MCF 10A (cell line): ENCODE measurements at regions of chr17 and their contacts with region 1.

Region 1: GRCh38 chr17:49646391-49647255 is 31.3 kb downstream of the SPOP start:
- DNase-seq: peak; percentile 76
- H3K4me3 Mint-ChIP-seq: peak overlapping the region; percentile 79
- H3K27ac Mint-ChIP-seq: peak overlapping the region; percentile 84
- H3K4me1 Mint-ChIP-seq: peaks cover 23% of the 10 kb centered on the region
- H3K27me3 Mint-ChIP-seq: no peaks in the 10 kb centered on the region
- CTCF ChIP-seq: no peak

Region 2: GRCh38 chr17:48352630-48353029 is 1294.0 kb before region 1 on chr17:
- CTCF ChIA-PET with region 1: no interaction called
- POLR2A ChIA-PET with region 1: no interaction called
- intact Hi-C with region 1: no loop called
- DNase-seq: no peak
- H3K4me3 Mint-ChIP-seq: no peak overlapping the region
- H3K27ac Mint-ChIP-seq: no peak overlapping the region
- H3K4me1 Mint-ChIP-seq: no peaks in the 10 kb centered on the region
- H3K27me3 Mint-ChIP-seq: peaks cover 40% of the 10 kb centered on the region
- CTCF ChIP-seq: no peak

Region 3: GRCh38 chr17:49515196-49515770 is 131.3 kb before region 1 on chr17:
- CTCF ChIA-PET with region 1: no interaction called
- POLR2A ChIA-PET with region 1: no interaction called
- intact Hi-C with region 1: no loop called
- DNase-seq: peak; percentile 91
- H3K4me3 Mint-ChIP-seq: no peak overlapping the region
- H3K27ac Mint-ChIP-seq: peak overlapping the region; percentile 97
- H3K4me1 Mint-ChIP-seq: peaks cover 18% of the 10 kb centered on the region
- H3K27me3 Mint-ChIP-seq: no peaks in the 10 kb centered on the region
- CTCF ChIP-seq: no peak

Region 4: DNA sequence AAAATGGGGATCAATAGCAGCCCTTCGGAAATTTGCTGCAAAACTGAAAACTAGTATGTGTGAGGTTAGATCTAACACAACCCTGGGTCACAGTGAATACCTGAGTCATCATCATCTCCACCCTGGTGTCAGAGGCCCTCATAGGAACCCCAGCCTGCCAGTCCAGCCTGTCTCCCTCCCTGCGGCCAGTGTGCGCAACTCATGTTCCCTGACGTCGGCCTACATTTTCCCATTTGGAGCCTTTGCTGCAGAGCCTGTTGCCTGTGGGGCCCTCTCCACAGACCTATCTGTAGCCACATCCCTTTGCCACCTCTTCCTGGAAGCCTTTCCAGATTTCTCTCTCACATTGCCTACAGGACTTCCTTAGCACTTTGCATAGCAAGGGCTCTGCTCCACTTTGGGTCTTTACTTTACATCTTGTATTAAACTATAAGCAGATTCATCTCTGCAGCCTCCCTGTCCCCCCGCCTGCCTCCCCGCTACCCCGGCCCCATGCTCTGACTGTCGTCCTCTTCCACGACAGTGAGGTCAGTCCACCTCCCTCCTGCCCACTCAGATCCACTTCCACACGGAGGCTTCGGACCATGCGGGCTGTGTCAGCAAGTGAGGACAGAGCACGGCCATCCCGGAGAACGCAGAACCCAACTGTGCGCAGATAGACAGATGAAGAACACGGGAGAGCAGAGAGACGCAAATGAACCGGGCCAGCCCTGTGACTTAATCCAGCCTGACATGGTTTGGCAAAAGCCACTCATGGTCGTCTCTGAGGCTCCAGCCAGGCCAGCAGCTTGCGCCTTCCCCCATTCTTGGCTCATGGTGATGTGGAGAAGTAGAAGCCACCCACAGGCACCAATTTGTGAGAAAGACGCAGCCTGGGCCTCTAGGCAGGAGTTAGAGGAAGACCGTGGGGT is 120.5 kb before region 1 on chr17:
- CTCF ChIA-PET with region 1: no interaction called
- POLR2A ChIA-PET with region 1: no interaction called
- intact Hi-C with region 1: no loop called
- DNase-seq: no peak
- H3K4me3 Mint-ChIP-seq: no peak overlapping the region
- H3K27ac Mint-ChIP-seq: no peak overlapping the region
- H3K4me1 Mint-ChIP-seq: peaks cover 6% of the 10 kb centered on the region
- H3K27me3 Mint-ChIP-seq: peaks cover 14% of the 10 kb centered on the region
- CTCF ChIP-seq: no peak

Region 5: DNA sequence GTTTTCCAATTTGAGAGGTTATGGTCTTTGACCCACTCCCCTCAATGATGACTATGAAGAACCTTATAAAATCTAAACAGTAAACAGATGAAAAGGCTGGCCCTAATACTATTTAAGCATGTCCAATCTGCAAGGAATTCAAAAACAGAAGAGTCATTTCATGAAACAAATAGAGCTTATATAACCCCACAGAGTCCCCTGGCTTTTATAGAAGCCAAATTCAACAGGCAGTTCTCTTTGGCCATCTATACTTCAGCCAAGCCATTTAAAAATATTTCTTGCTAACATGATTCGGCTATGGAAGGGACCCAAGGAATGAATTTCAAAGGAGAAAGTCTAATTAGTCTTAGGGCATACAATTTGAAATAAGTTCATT is 12.2 kb before region 1 on chr17:
- CTCF ChIA-PET with region 1: interaction called, 7 read pairs
- POLR2A ChIA-PET with region 1: interaction called, 22 read pairs
- intact Hi-C with region 1: no loop called
- DNase-seq: no peak
- H3K4me3 Mint-ChIP-seq: no peak overlapping the region
- H3K27ac Mint-ChIP-seq: no peak overlapping the region
- H3K4me1 Mint-ChIP-seq: peaks cover 4% of the 10 kb centered on the region
- H3K27me3 Mint-ChIP-seq: no peaks in the 10 kb centered on the region
- CTCF ChIP-seq: no peak

Region 6: DNA sequence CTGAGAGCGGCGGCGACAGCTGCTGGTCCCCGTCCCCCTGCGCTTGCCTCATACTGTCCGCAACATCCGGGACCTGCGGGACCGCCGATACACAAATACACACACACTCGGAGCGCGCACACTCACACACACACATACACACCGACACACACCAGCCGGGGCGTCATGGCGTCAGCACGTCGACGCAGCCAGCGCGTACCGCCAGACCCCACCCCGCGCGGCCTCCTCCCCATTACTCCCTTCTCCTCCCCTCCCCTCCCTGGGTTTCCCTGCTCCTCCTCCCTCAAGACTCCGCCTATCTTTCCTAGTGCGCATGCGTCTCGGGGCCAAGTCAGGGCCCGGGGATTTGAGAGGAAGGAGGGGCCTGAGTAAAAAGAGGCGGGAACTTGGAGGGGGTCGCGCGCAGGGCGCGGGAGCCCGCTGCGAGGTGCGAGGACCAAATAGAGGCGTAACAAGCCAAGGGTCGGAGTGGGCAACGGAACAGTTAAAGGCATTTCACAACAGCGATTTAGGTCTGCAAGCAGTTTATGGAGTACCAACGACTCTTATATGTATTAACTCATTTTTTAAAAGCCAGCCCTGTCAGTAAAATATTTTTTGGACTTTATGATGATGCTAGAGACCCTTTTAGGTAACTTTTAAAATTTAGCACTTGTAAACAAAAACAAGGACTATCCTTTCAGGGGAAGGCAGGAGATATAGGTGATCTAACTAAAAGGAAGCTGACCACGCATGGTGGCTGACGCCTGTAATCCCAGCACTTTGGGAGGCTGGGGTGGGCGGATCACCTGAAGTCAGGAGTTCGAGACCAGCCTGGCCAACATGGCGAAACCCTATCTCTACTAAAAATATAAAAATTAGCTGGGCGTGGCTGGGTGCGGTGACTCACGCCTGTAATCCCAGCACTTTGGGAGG is 31.6 kb after region 1 on chr17 and contains the start of gene SPOP:
- CTCF ChIA-PET with region 1: interaction called, 3 read pairs
- POLR2A ChIA-PET with region 1: interaction called, 39 read pairs
- intact Hi-C with region 1: loop called (anchors 1 kb)
- DNase-seq: peak; percentile 99
- H3K4me3 Mint-ChIP-seq: peak within 1 kb of the TSS; percentile 77
- H3K27ac Mint-ChIP-seq: peak within 1 kb of the TSS; percentile 57
- H3K4me1 Mint-ChIP-seq: peaks cover 10% of the 10 kb centered on the region
- H3K27me3 Mint-ChIP-seq: no peaks in the 10 kb centered on the region
- CTCF ChIP-seq: no peak
- total RNA-seq, gene SPOP: 42.1 and 52.3 TPM in 2 replicates

Region 7: DNA sequence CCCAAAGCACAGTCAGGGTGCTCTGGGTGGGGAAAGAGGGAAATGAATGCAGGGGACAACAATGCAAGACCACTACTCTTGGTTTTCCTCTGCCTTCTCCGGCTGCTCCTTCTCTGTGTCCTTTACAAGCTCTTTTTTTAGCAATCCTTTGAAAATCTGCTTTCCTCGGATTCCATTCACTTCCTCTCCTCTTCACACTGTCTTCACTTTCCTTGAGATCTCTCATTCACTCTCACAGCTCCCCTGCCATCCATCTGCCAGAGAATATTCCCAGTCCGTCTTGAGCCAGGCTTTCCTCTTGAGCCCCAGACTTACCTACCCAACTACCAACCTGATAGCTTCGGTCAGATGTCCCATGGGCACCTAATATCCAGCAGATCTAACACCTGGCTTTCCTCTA is 42.2 kb after region 1 on chr17:
- CTCF ChIA-PET with region 1: no interaction called
- POLR2A ChIA-PET with region 1: no interaction called
- intact Hi-C with region 1: no loop called
- DNase-seq: no peak
- H3K4me3 Mint-ChIP-seq: no peak overlapping the region
- H3K27ac Mint-ChIP-seq: no peak overlapping the region
- H3K4me1 Mint-ChIP-seq: peaks cover 6% of the 10 kb centered on the region
- H3K27me3 Mint-ChIP-seq: no peaks in the 10 kb centered on the region
- CTCF ChIP-seq: no peak